Cardiac septum (tissue), 1 donor: ENCODE measurements at regions of chr7 and their contacts with region 1.

Region 1: GRCh38 chr7:101688183-101688831 is 59.2 kb upstream of the MYL10 start:
- DNase-seq: peak; percentile 92

Region 2: GRCh38 chr7:102125127-102125561 is 436.8 kb after region 1 on chr7:
- intact Hi-C with region 1: loop called (anchors 10 kb)
- DNase-seq: no peak

Region 3: DNA sequence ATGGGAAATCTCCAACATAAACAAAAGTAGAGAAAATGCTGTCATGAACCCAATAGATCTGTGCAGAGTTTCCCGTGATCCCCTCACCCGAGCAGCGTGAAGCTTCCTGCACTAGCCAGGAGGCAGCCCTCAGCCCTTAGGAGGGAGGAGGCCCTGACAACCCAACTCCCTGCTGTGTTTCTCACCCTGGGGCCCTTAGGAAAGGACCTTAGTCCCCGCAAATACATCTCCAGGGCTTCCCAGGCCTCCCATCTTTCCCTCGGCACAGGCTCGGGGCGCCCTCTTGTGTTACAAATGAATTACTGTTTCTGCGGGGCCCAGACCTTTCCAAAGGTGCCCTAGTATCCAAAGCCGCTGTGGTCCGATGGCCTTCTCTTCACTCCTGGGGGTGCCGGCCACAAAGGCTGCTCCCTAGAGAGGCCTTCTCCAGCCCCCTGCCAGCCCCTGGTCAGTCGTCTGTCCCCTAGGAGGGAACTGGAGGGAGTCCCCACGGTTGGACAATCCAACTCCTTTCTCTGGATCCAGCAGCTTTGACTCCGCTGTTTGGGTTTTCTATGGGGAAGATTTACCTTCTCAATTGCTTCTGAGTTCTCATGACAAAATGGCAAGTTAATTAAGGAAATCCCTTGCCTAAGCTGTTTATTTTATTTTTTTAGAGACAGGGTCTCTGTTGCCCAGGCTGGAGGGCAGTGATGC is 548.4 kb after region 1 on chr7:
- intact Hi-C with region 1: loop called (anchors 2 kb)
- DNase-seq: no peak

Region 4: DNA sequence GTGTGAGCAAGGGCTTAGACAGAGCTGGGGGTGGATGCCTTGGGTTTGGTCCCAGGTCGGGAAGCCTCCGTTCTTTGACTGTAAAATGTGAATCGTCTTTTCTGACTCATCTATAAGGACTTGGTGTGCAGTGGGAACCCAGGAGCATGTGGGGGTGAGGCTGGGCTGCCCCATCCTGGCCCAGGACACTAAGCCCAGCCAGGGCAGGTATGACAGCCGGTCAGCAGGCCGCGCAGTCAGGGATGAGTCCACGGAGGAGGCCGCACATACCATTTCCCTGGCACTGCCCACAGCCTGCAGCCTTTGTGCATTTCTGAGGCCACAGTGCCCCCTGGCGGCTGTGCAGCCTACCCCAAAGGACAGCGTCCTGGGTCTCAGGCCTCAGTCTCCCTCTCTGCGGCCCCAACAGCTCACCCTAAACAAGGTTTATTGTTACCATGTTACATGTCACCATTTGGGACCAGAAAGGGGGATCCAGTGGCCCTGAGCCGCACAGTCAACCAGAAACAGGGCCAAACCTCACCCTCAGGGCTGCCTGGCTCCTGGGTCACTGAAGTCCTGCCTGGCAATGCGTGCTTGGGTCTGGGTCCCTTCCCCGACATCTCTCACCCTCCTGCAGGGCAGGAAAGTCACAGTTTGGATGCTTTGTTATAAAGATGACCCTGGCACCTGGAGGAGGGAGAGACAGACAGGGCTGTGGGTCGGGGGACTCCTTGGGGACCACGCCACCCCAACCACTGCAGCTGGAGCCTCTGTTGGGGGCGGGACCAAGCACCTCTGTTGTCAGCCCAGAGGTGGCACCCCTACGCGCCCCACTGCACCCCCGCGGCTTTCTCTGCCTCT is 584.0 kb after region 1 on chr7:
- intact Hi-C with region 1: loop called (anchors 5 kb)
- DNase-seq: peak; percentile 86